SK-N-SH (cell line): ENCODE measurements at regions of chr14 and their contacts with region 1.

Region 1: DNA sequence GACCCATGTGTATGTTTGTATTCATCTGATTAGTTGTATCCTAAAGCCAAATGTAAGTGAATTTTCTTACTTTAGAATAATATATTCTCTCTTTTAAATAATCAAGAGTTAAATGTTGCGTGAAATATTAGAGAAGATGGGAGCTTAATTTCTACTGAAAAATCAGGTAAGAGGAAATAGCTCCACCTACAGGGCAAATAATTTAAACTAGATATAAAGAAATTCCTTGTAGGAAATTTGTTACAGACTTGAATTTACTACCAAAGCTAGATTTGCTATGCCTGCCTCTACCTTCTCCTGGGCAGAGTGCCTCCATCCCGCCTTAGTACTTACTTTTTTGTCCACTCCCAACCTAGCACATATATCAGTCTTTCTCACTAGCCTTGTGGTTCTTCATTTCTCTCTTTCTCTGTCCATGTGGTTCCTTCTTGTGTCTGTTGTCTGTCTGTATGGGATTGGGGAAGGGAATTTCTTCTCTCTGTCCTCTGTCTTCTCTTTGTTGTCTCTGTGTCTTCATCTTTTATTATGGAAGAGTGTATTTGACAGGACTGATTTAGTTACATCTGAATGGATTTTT is 44.7 kb downstream of the PALS1 start:
- DNase-seq: peak; percentile 29
- H3K4me3 ChIP-seq: no peak overlapping the region
- H3K27ac ChIP-seq: no peak overlapping the region
- H3K4me1 ChIP-seq: no peaks in the 10 kb centered on the region; a peak in 1 of 4 replicates
- H3K27me3 ChIP-seq: no peaks in the 10 kb centered on the region
- CTCF ChIP-seq: peak; percentile 73
- EP300 ChIP-seq: no peak
- RAD21 ChIP-seq: peak; percentile 69

Region 2: DNA sequence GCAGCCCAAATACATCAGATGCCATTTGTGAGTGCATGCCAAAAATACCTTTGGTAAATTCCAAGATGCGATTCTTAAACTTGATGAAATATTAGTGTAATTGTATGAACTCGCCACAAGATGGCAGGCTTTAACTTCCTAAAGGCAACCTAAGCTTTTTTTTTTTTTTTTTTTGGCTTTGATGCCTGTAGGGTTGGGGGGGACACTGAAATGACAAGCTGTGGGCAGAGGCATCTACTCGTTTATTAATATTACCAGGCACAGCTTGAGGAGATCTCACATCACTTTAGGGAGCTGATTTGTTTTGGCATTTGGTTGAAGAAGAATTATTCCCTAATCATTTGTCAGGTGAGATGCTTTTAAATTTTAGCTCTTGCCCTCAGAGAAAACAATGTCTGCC is 926.5 kb before region 1 on chr14:
- CTCF ChIA-PET with region 1: interaction called, 14 read pairs
- POLR2A ChIA-PET with region 1: no interaction called
- DNase-seq: peak; percentile 45
- H3K4me3 ChIP-seq: no peak overlapping the region; a peak in 1 of 4 replicates
- H3K27ac ChIP-seq: no peak overlapping the region
- H3K4me1 ChIP-seq: peaks cover 0 to 2% of the 10 kb centered on the region in 2 experiments; a peak in 1 of 4 replicates
- H3K27me3 ChIP-seq: no peaks in the 10 kb centered on the region
- CTCF ChIP-seq: peak; percentile 76
- EP300 ChIP-seq: no peak
- RAD21 ChIP-seq: peak; percentile 89

Region 3: GRCh38 chr14:66624299-66624937 is 661.5 kb before region 1 on chr14:
- CTCF ChIA-PET with region 1: interaction called, 13 read pairs
- POLR2A ChIA-PET with region 1: no interaction called
- DNase-seq: peak; percentile 60
- H3K4me3 ChIP-seq: no peak overlapping the region; a peak in 1 of 4 replicates
- H3K27ac ChIP-seq: no peak overlapping the region
- H3K4me1 ChIP-seq: peaks cover 0 to 3% of the 10 kb centered on the region in 2 experiments; a peak in 2 of 4 replicates
- H3K27me3 ChIP-seq: no peaks in the 10 kb centered on the region
- CTCF ChIP-seq: peak; percentile 79
- EP300 ChIP-seq: no peak
- RAD21 ChIP-seq: peak; percentile 90

Region 4: GRCh38 chr14:67166450-67166853 is 119.5 kb before region 1 on chr14:
- CTCF ChIA-PET with region 1: interaction called, 78 read pairs
- POLR2A ChIA-PET with region 1: no interaction called
- DNase-seq: peak; percentile 41
- H3K4me3 ChIP-seq: no peak overlapping the region; a peak in 1 of 4 replicates
- H3K27ac ChIP-seq: no peak overlapping the region
- H3K4me1 ChIP-seq: peaks cover 0 to 10% of the 10 kb centered on the region in 2 experiments; a peak in 1 of 4 replicates
- H3K27me3 ChIP-seq: no peaks in the 10 kb centered on the region
- CTCF ChIP-seq: peak; percentile 97
- EP300 ChIP-seq: no peak
- RAD21 ChIP-seq: peak; percentile 91

Region 5: DNA sequence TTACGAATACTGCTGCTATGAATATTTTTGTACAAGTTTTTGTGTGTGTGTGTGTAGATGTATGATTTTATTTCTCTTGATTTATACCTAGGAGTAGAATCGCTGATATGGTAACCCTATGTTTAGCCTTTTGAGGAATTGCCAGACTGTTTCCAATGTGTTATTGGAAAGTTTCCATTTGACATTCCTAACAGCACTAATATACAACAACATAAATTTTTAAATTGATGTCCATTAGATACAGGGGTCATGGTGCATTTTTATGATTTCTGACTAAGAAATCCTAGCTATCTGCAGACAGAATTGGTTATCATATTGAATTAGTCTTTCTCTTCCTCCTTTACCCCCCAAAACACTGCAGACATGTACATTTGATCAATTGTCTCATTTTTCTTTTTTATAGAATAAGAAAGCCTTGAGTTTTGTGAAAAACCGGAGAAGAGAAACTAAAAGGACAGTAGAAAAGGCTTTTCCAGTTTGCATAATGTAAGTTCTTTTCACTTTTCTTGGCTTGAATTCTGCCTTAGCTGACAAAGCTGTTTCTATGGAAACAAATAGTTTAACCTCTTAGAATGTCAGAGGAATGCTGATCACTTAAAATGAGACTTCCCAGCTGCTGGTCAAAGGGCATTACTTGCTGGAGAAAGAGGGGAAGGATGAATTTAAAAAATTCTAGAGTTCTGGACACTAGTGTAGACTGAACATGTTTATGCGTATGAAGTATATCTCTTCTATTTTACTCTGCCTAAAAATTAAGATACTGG is 16.5 kb before region 1 on chr14:
- CTCF ChIA-PET with region 1: interaction called, 11 read pairs
- POLR2A ChIA-PET with region 1: no interaction called
- DNase-seq: peak; percentile 4
- H3K4me3 ChIP-seq: peak overlapping the region; percentile 12 to 21; a peak in 2 of 4 replicates
- H3K27ac ChIP-seq: peak overlapping the region; percentile 73 to 84; a peak in 3 of 4 replicates
- H3K4me1 ChIP-seq: peaks cover 0 to 10% of the 10 kb centered on the region in 2 experiments
- H3K27me3 ChIP-seq: no peaks in the 10 kb centered on the region
- CTCF ChIP-seq: no peak
- EP300 ChIP-seq: no peak
- RAD21 ChIP-seq: no peak